ENCODE measurements at regions of chr20 and their contacts with region 1.

Region 1: GRCh38 chr20:44080646-44081267 is 106.2 kb downstream of the JPH2 start:
- DNase-seq: peak; percentile 52
- ATAC-seq: peak; percentile 99
- H3K4me3 Mint-ChIP-seq: no peak overlapping the region
- H3K27ac Mint-ChIP-seq: no peak overlapping the region
- H3K4me1 Mint-ChIP-seq: peaks cover 4% of the 10 kb centered on the region
- H3K27me3 Mint-ChIP-seq: no peaks in the 10 kb centered on the region
- CTCF ChIP-seq: peak; percentile 56

Region 2: DNA sequence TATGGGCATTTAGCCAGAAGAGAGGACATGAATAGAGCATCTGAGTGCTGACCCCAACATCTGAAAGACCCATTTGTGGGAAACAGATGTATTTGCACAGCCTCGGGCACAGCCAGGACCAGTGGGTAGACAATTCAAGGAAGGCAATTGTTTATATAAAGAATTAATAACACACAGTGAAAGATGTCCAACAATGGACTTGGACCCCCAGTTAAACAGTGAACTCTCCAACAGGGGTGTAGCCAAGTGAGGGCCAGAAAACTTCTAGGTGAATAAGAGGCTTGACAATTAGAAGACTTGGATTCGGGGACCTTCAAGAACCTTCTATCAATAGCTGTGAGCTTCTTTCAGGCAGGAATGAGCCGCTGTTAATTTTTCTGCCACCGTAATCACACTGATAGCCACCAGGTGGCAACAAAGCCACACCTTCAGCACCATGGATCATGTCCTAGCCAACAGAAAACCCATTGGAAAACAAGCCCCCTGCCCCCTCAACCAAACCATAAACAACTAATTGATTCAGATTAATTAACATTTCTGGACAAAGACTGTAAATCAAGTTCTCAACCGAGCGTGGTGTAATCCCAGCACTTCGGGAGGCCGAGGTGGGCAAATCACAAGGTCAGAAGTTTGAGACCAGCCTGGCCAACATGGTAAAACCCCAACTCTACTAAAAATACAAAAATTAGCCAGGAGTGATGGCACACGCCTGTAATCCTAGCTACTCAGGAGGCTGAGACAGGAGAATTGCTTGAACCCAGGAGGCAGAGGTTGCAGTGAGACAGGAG is 631.8 kb before region 1 on chr20:
- CTCF ChIA-PET with region 1: interaction called, 17 read pairs
- POLR2A ChIA-PET with region 1: interaction called, 3 read pairs
- intact Hi-C with region 1: loop called (anchors 1 kb)
- DNase-seq: no peak
- ATAC-seq: peak; percentile 72
- H3K4me3 Mint-ChIP-seq: no peak overlapping the region
- H3K27ac Mint-ChIP-seq: no peak overlapping the region
- H3K4me1 Mint-ChIP-seq: peaks cover 3% of the 10 kb centered on the region
- H3K27me3 Mint-ChIP-seq: peaks cover 28% of the 10 kb centered on the region
- CTCF ChIP-seq: no peak

Region 3: GRCh38 chr20:43691928-43692524 is 388.7 kb before region 1 on chr20:
- CTCF ChIA-PET with region 1: interaction called, 4 read pairs
- POLR2A ChIA-PET with region 1: no interaction called
- intact Hi-C with region 1: loop called (anchors 1 kb)
- DNase-seq: peak; percentile 63
- ATAC-seq: peak; percentile 89
- H3K4me3 Mint-ChIP-seq: no peak overlapping the region
- H3K27ac Mint-ChIP-seq: peak overlapping the region; percentile 6
- H3K4me1 Mint-ChIP-seq: peaks cover 21% of the 10 kb centered on the region
- H3K27me3 Mint-ChIP-seq: no peaks in the 10 kb centered on the region
- CTCF ChIP-seq: peak; percentile 38

Region 4: DNA sequence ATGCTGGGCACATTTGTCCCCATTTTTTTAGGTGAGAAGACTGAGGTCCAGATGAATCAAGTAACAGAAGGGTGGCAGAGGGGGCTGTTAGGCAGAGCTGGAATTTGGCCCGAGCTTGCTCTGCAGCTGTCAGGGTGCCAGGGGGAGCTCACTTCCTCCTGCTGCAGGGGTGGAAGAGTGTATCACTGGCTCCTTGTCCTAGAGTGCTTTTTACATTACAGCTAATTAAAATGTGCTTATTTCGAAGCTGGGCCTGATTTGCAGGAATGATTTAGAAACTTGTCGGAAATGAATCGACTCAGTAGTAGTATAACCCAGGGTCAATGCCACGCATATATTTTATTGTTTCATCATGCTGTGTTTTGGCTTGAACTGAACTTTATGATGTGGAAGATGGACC is 155.0 kb before region 1 on chr20:
- CTCF ChIA-PET with region 1: no interaction called
- POLR2A ChIA-PET with region 1: no interaction called
- intact Hi-C with region 1: loop called (anchors 5 kb)
- DNase-seq: no peak
- ATAC-seq: peak; percentile 55
- H3K4me3 Mint-ChIP-seq: peak overlapping the region; percentile 25
- H3K27ac Mint-ChIP-seq: no peak overlapping the region
- H3K4me1 Mint-ChIP-seq: peaks cover 30% of the 10 kb centered on the region
- H3K27me3 Mint-ChIP-seq: peaks cover 10% of the 10 kb centered on the region
- CTCF ChIP-seq: no peak

Region 5: DNA sequence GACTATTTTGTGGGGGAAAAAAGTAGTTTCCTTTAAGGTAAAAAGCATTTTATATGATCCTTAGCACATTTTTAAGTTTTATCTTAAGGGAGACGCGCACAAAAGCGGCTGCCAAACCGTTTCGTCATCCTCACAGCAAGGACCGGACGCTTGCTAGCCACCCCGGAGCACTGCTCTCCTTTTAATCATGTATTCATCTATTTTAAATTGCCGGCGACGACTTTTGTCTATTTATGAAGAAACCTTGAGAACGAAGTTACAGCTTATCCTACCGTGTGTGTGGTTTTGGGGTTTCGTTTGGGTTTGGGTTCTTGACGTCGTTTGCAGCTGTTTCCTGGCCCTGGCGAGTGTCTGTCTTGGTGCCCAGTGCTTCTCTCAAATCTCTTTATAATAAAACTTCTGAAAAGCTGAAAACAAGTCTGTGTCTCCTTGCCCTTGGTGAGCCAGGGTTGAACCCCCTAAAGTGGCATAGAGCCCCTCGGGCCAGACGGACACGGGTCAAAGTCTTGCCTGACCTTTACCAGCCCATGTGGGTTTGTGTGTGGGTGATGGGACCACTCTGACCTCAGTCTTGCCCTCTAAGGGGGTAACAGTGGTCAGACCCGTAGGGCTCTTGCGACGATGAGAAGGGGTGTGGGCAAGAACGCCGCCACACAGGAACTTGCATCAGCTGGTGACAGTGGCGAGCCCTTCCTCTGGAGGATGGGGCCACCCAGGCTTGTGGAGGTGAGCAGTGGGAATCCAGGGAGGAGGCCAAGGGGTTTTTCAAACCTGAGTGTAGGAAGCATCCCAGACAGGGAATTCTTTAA is 11.3 kb before region 1 on chr20:
- CTCF ChIA-PET with region 1: interaction called, 4 read pairs
- POLR2A ChIA-PET with region 1: interaction called, 5 read pairs
- intact Hi-C with region 1: loop called (anchors 1 kb)
- DNase-seq: peak; percentile 44
- ATAC-seq: peak; percentile 60
- H3K4me3 Mint-ChIP-seq: peak overlapping the region; percentile 80
- H3K27ac Mint-ChIP-seq: peak overlapping the region; percentile 88
- H3K4me1 Mint-ChIP-seq: peaks cover 39% of the 10 kb centered on the region
- H3K27me3 Mint-ChIP-seq: peaks cover 5% of the 10 kb centered on the region
- CTCF ChIP-seq: no peak

Region 6: DNA sequence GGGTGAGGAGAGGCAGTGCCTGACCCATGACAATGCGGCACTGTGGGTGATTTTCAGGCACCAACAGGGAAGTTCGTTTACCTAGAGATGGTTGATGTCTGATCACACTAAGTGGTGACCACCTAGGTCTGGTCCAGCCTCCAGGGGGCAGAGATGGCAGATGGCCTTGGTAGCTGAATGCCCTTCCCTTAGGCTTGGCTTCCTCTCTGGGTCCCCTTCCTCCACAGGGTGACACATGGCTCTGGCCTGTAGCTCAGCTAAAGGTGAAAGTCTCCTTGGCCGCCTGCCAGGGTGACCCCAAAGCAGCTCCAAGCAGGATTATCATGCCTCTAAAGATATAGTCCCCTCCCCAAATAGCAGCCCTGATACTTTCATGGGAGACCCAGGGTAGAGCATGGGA is 172.8 kb after region 1 on chr20:
- CTCF ChIA-PET with region 1: no interaction called
- POLR2A ChIA-PET with region 1: no interaction called
- intact Hi-C with region 1: no loop called
- DNase-seq: no peak
- ATAC-seq: no peak
- H3K4me3 Mint-ChIP-seq: no peak overlapping the region
- H3K27ac Mint-ChIP-seq: no peak overlapping the region
- H3K4me1 Mint-ChIP-seq: no peaks in the 10 kb centered on the region
- H3K27me3 Mint-ChIP-seq: peaks cover 13% of the 10 kb centered on the region
- CTCF ChIP-seq: no peak

Measured in activated B cell treated with CpG ODN at 0.5 μM for 24 hours (primary cell).